Left cardiac atrium (tissue), 4 donors: ENCODE measurements at regions of chr6 and their contacts with region 1.

Region 1: DNA sequence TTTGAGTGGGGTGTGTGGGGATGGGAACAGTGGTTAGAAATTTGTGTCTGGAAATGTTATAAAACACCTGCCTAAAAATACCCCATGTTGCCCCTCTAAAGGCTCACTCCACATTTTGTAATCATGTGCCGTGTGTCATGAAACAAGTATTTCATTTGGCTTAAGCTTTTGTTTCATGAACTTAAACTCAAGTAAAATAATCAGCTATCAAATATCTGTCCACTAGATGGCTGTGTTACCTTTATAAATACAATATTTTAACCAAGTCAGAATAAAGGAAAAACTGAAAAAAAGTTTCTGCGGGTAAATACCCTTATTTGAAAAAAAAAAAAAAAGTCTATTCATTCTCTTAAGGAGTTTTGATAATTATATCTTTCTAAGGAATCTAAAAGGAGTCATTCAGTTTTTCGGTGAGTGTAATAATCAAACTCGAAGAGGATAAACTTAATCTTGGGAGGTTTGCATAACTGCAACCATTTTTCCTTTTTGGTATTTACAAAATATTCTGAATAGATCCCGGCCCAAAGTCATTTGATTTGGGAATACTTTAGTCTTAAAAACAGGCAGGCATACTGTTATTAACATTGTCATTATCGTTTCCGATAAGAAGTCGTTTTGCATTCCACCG is 29.9 kb upstream of the MTRF1L start:
- DNase-seq: no peak
- ATAC-seq: no peak

Region 2: DNA sequence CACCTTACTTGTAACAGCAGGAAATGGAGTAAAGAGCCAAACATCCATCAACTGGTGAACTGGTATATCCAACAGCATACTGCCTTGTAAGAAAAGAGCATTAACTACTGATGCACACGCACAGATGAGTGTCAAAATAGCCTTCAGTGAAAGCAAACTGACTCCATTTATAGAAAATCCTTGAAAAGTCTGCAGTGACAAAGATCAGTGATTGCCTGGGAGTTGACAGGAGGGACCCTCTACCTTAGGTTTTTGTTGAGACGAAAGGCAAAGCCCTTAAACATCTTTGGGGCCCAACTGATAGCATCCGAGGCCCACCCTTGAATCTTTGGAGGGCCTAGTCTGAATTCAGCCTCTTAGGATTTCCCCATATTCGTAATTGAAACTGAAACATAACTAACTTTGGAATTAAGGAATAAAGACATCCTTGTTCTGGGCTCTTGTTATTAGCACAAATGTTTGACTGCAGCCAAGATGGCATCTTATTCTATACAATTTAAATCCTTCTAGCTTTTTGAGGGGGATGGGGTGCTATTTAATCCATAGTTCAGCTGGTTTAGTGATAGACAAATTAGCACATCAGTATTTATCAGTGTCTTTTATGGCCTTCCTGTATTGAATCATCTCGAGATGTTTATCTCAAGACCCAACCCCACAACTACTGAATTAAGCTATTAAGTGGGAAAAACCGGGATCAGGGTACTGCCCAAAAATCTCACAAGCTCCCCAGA is 62.5 kb before region 1 on chr6:
- intact Hi-C with region 1: no loop called
- DNase-seq: no peak
- ATAC-seq: no peak

Region 3: GRCh38 chr6:153108315-153108714 is 75.9 kb after region 1 on chr6:
- intact Hi-C with region 1: loop called in 1 of 2 experiments (anchors 10 kb)
- DNase-seq: no peak
- ATAC-seq: no peak

Region 4: GRCh38 chr6:153511896-153512496 is 479.6 kb after region 1 on chr6:
- intact Hi-C with region 1: loop called in 1 of 2 experiments (anchors 10 kb)
- DNase-seq: no peak
- ATAC-seq: peak; percentile 34 to 44

Region 5: DNA sequence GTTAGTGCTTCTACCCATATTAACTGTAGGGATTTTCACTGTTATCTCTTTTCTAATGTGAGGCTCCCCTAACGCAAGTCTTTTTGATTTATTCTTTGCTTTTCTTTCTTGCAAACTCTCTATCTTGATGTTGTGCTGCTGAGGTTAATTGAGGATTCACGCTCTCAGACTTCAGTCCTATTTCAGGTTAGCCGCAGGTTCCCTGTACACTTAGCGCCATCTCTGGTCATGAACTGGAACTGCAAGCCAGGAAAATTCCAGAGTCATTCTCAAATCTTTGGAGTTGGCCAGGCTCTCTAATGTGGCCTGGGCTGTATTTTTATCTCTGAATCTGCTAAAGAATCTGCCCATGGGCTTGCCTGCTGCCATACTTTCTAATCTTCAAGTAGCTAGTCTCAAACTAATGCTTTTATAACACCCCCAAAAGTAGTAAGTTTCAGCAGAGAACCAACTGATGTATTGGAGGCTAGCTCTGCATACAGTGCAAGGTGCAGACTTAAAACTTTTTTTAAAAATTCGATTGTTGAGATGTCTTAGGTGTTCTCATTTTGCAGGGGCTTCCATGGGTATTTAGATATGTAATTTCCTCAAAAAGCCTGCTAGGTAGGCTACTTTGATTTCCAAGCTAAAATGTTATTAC is 915.6 kb after region 1 on chr6:
- intact Hi-C with region 1: loop called in 1 of 2 experiments (anchors 5 kb)
- DNase-seq: no peak
- ATAC-seq: peak; percentile 23 to 44